Naive thymus-derived CD4-positive, alpha-beta T cell (primary cell): ENCODE measurements at regions of chr18 and their contacts with region 1.

Region 1: GRCh38 chr18:31957728-31958127 is 14.8 kb upstream of the TRAPPC8 start:
- DNase-seq: no peak
- ATAC-seq: no peak
- H3K4me3 ChIP-seq: no peak overlapping the region
- H3K4me3 Mint-ChIP-seq: no peak overlapping the region
- H3K27ac ChIP-seq: no peak overlapping the region
- H3K27ac Mint-ChIP-seq: no peak overlapping the region
- H3K4me1 ChIP-seq: no peaks in the 10 kb centered on the region
- H3K4me1 Mint-ChIP-seq: peaks cover 0 to 2% (median 0%) of the 10 kb centered on the region in 7 donors
- H3K27me3 ChIP-seq: no peaks in the 10 kb centered on the region
- H3K27me3 Mint-ChIP-seq: peaks cover 0 to under 1% (median 0%) of the 10 kb centered on the region in 5 donors

Region 2: DNA sequence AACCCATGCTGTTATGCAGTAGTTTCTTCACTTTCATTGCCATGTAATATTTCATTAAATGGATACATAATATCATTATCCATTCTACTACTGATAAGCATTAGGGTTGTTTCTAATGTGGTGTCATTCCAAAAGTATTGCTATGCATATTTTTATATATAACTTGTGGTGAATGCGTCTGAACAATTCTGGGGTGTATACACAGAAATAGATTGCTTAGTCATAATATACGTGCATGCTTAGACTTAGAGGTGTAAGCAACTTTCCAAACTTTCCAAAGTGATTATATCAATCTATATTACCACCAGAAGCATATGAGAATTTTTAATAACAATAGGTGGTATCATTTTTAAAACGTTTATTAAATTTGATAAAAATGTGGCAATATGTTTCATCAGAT is 1456.1 kb before region 1 on chr18:
- CTCF ChIA-PET with region 1: no interaction called
- POLR2A ChIA-PET with region 1: no interaction called
- intact Hi-C with region 1: no loop called
- DNase-seq: no peak
- ATAC-seq: no peak
- H3K4me3 ChIP-seq: no peak overlapping the region
- H3K4me3 Mint-ChIP-seq: no peak overlapping the region
- H3K27ac ChIP-seq: no peak overlapping the region
- H3K27ac Mint-ChIP-seq: no peak overlapping the region
- H3K4me1 ChIP-seq: no peaks in the 10 kb centered on the region
- H3K4me1 Mint-ChIP-seq: no peaks in the 10 kb centered on the region
- H3K27me3 ChIP-seq: no peaks in the 10 kb centered on the region
- H3K27me3 Mint-ChIP-seq: no peaks in the 10 kb centered on the region

Region 3: GRCh38 chr18:31741097-31741735 is 216.5 kb before region 1 on chr18:
- CTCF ChIA-PET with region 1: no interaction called
- POLR2A ChIA-PET with region 1: no interaction called
- intact Hi-C with region 1: loop called (anchors 1 kb)
- DNase-seq: peak in 7 of 9 donors; percentile 12 to 56 (median 46)
- ATAC-seq: peak; percentile 82
- H3K4me3 ChIP-seq: no peak overlapping the region
- H3K4me3 Mint-ChIP-seq: no peak overlapping the region
- H3K27ac ChIP-seq: no peak overlapping the region
- H3K27ac Mint-ChIP-seq: peak overlapping the region in 1 of 9 donors; percentile 14
- H3K4me1 ChIP-seq: no peaks in the 10 kb centered on the region
- H3K4me1 Mint-ChIP-seq: no peaks in the 10 kb centered on the region
- H3K27me3 ChIP-seq: no peaks in the 10 kb centered on the region
- H3K27me3 Mint-ChIP-seq: no peaks in the 10 kb centered on the region

Region 4: GRCh38 chr18:31860488-31860887 is 97.2 kb before region 1 on chr18:
- CTCF ChIA-PET with region 1: interaction called, 3 read pairs
- POLR2A ChIA-PET with region 1: no interaction called
- intact Hi-C with region 1: loop called in 1 of 2 experiments (anchors 5 kb)
- DNase-seq: no peak
- ATAC-seq: no peak
- H3K4me3 ChIP-seq: no peak overlapping the region
- H3K4me3 Mint-ChIP-seq: no peak overlapping the region
- H3K27ac ChIP-seq: no peak overlapping the region
- H3K27ac Mint-ChIP-seq: no peak overlapping the region
- H3K4me1 ChIP-seq: no peaks in the 10 kb centered on the region
- H3K4me1 Mint-ChIP-seq: peaks cover 0 to 6% (median 0%) of the 10 kb centered on the region in 7 donors
- H3K27me3 ChIP-seq: no peaks in the 10 kb centered on the region
- H3K27me3 Mint-ChIP-seq: no peaks in the 10 kb centered on the region

Region 5: GRCh38 chr18:31920277-31920676 is 37.5 kb before region 1 on chr18:
- CTCF ChIA-PET with region 1: interaction called, 3 read pairs
- POLR2A ChIA-PET with region 1: no interaction called
- intact Hi-C with region 1: loop called in 1 of 2 experiments (anchors 5 kb)
- DNase-seq: no peak
- ATAC-seq: no peak
- H3K4me3 ChIP-seq: no peak overlapping the region
- H3K4me3 Mint-ChIP-seq: no peak overlapping the region
- H3K27ac ChIP-seq: no peak overlapping the region
- H3K27ac Mint-ChIP-seq: peak overlapping the region in 4 of 9 donors; percentile 28 to 65 (median 44)
- H3K4me1 ChIP-seq: peaks cover 0 to 3% of the 10 kb centered on the region in 2 donors
- H3K4me1 Mint-ChIP-seq: peaks cover 2 to 20% (median 7%) of the 10 kb centered on the region in 7 donors
- H3K27me3 ChIP-seq: no peaks in the 10 kb centered on the region
- H3K27me3 Mint-ChIP-seq: no peaks in the 10 kb centered on the region

Region 6: GRCh38 chr18:33653231-33653630 is 1695.5 kb after region 1 on chr18:
- CTCF ChIA-PET with region 1: no interaction called
- POLR2A ChIA-PET with region 1: no interaction called
- intact Hi-C with region 1: no loop called
- DNase-seq: no peak
- ATAC-seq: no peak
- H3K4me3 ChIP-seq: no peak overlapping the region
- H3K4me3 Mint-ChIP-seq: no peak overlapping the region
- H3K27ac ChIP-seq: no peak overlapping the region
- H3K27ac Mint-ChIP-seq: no peak overlapping the region
- H3K4me1 ChIP-seq: no peaks in the 10 kb centered on the region
- H3K4me1 Mint-ChIP-seq: no peaks in the 10 kb centered on the region
- H3K27me3 ChIP-seq: no peaks in the 10 kb centered on the region
- H3K27me3 Mint-ChIP-seq: no peaks in the 10 kb centered on the region